GM12878 (cell line): ENCODE measurements at regions of chr12 and their contacts with region 1.

Region 1: DNA sequence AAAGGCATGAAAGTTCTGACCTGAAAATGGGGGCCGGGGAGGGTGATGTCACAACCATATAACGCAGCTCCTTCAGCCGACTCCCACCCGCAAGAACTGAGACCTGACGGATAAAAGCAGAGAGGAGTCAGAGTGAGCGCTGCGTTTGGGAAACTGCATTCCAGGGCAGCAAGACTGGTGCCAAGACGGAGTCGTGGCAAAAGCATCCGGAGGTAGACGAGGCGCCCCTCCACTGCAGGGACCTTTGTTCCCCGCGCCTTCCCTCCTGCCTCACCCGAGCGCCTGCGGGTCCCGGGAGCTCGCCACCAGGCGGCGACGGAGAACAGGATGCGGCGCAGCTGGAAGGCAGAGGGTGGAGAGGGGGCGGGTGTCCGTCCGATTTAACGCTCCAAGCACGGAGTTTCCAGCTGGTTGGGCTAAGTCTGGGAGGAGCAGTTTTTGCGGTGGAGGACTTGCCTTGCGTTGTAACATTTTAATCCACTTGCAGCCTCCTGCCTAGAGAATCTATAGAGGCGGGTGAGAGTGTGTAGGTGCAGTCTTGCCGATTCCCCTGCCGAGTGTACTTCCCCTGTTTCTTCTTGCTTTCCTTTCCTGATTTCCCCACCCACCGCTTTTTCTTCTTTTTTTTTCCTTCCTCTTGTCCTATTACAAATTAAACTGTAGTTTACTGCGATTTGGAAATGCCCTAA is 1.2 kb upstream of the CPNE8 start:
- DNase-seq: peak; percentile 56
- ATAC-seq: peak; percentile 71
- H3K4me3 ChIP-seq: peak overlapping the region; percentile 82
- H3K27ac ChIP-seq: peak overlapping the region; percentile 95
- H3K4me1 ChIP-seq: no peaks in the 10 kb centered on the region; the same call in 1 of the 2 replicates
- H3K27me3 ChIP-seq: no peaks in the 10 kb centered on the region
- CTCF ChIP-seq: peak; percentile 88 to 92 (median 89)
- EP300 ChIP-seq: 0 out of 4 replicates have a peak, but pooled peaks of 1 of the 2 experiments have one; percentile 17
- POLR2A ChIP-seq: peak; percentile 78
- RAD21 ChIP-seq: peak; percentile 82

Region 2: GRCh38 chr12:38324896-38325295 is 581.7 kb before region 1 on chr12:
- CTCF ChIA-PET with region 1: interaction called, 24 read pairs
- POLR2A ChIA-PET with region 1: interaction called, 3 read pairs
- RAD21 ChIA-PET with region 1: interaction called, 17 read pairs
- SMC1A ChIA-PET with region 1: interaction called, 12 read pairs
- in situ Hi-C with region 1: no loop called
- intact Hi-C with region 1: loop called (anchors 5 kb)
- DNase-seq: no peak
- ATAC-seq: no peak
- H3K4me3 ChIP-seq: no peak overlapping the region
- H3K27ac ChIP-seq: no peak overlapping the region
- H3K4me1 ChIP-seq: no peaks in the 10 kb centered on the region
- H3K27me3 ChIP-seq: no peaks in the 10 kb centered on the region
- CTCF ChIP-seq: no peak
- EP300 ChIP-seq: no peak
- POLR2A ChIP-seq: no peak
- RAD21 ChIP-seq: no peak

Region 3: DNA sequence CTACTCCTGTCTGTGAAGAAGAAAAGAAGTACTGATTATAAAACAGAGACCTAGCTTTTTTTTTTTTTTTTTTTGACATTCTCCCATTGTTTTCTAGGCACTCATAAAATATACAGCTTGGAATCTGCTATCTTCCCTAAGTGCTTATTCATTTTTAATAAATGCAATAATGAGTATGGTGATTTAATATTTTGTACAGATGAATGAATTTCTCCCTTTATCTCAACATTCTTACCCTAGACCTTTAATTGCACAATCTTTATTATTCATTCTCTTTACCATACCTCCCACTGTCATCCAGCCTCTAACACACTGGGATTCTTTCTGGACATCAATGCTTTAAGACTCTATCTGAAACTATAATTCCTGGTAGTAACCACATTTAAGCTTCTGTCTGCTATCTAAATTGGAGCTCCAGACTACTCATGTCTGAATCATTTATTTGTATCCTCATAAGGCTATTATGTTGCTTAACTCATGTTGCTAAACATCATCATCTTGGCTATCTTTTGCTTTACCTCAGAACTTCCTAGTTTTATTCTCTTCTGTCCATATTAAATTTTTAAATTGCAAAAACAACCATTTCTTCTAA is 319.9 kb before region 1 on chr12:
- CTCF ChIA-PET with region 1: interaction called, 3 read pairs
- POLR2A ChIA-PET with region 1: no interaction called
- RAD21 ChIA-PET with region 1: no interaction called
- SMC1A ChIA-PET with region 1: interaction called, 4 read pairs
- in situ Hi-C with region 1: no loop called
- intact Hi-C with region 1: loop called (anchors 10 kb)
- DNase-seq: no peak
- ATAC-seq: no peak
- H3K4me3 ChIP-seq: no peak overlapping the region
- H3K27ac ChIP-seq: no peak overlapping the region
- H3K4me1 ChIP-seq: no peaks in the 10 kb centered on the region
- H3K27me3 ChIP-seq: no peaks in the 10 kb centered on the region
- CTCF ChIP-seq: no peak
- EP300 ChIP-seq: no peak
- POLR2A ChIP-seq: no peak
- RAD21 ChIP-seq: no peak

Region 4: DNA sequence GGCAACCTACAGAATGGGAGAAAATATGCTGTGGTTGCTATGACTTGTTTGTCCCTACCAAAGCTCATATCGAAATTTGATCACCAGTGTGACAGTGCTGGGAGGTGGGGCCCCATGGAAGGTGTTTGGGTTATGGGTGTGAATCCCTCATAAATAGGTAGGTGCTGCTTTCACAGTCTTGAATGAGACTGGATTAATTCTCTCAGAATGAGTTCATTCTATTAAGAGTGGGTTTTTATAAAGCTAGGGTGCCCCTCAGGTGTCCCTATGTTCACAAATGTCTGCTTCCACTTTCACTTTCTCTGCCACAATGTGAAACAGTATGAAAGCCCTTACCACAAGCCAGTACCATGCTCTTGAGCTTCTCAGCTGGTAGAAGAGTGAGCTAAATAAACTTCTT is 134.8 kb before region 1 on chr12:
- CTCF ChIA-PET with region 1: interaction called, 34 read pairs
- POLR2A ChIA-PET with region 1: interaction called, 27 read pairs
- RAD21 ChIA-PET with region 1: interaction called, 58 read pairs
- SMC1A ChIA-PET with region 1: interaction called, 24 read pairs
- in situ Hi-C with region 1: no loop called
- intact Hi-C with region 1: loop called (anchors 2 kb)
- DNase-seq: peak; percentile 71
- ATAC-seq: peak; percentile 85
- H3K4me3 ChIP-seq: peak overlapping the region; percentile 6; the same call in 1 of the 2 replicates
- H3K27ac ChIP-seq: peak overlapping the region; percentile 75
- H3K4me1 ChIP-seq: peaks cover 11% of the 10 kb centered on the region; the same call in 1 of the 2 replicates
- H3K27me3 ChIP-seq: no peaks in the 10 kb centered on the region
- CTCF ChIP-seq: no peak
- EP300 ChIP-seq: no peak
- POLR2A ChIP-seq: no peak
- RAD21 ChIP-seq: no peak

Region 5: GRCh38 chr12:38880288-38880687 is 26.3 kb before region 1 on chr12:
- CTCF ChIA-PET with region 1: interaction called, 23 read pairs
- POLR2A ChIA-PET with region 1: interaction called, 4 read pairs
- RAD21 ChIA-PET with region 1: interaction called, 170 read pairs
- SMC1A ChIA-PET with region 1: interaction called, 38 read pairs
- in situ Hi-C with region 1: no loop called
- intact Hi-C with region 1: loop called (anchors 2 kb)
- DNase-seq: peak; percentile 30
- ATAC-seq: peak; percentile 86
- H3K4me3 ChIP-seq: no peak overlapping the region
- H3K27ac ChIP-seq: no peak overlapping the region
- H3K4me1 ChIP-seq: no peaks in the 10 kb centered on the region
- H3K27me3 ChIP-seq: no peaks in the 10 kb centered on the region
- CTCF ChIP-seq: no peak
- EP300 ChIP-seq: 0 out of 4 replicates have a peak, but pooled peaks of 1 of the 2 experiments have one; percentile 8
- POLR2A ChIP-seq: no peak
- RAD21 ChIP-seq: no peak

Region 6: GRCh38 chr12:38921025-38921677 is 14.5 kb after region 1 on chr12:
- CTCF ChIA-PET with region 1: interaction called, 26 read pairs
- POLR2A ChIA-PET with region 1: interaction called, 5 read pairs
- RAD21 ChIA-PET with region 1: interaction called, 4 read pairs
- SMC1A ChIA-PET with region 1: interaction called, 12 read pairs
- in situ Hi-C with region 1: no loop called
- intact Hi-C with region 1: no loop called
- DNase-seq: no peak
- ATAC-seq: peak; percentile 95
- H3K4me3 ChIP-seq: no peak overlapping the region
- H3K27ac ChIP-seq: no peak overlapping the region
- H3K4me1 ChIP-seq: no peaks in the 10 kb centered on the region
- H3K27me3 ChIP-seq: no peaks in the 10 kb centered on the region
- CTCF ChIP-seq: peak; percentile 60 to 73 (median 61)
- EP300 ChIP-seq: no peak
- POLR2A ChIP-seq: no peak
- RAD21 ChIP-seq: peak; percentile 63

Region 7: DNA sequence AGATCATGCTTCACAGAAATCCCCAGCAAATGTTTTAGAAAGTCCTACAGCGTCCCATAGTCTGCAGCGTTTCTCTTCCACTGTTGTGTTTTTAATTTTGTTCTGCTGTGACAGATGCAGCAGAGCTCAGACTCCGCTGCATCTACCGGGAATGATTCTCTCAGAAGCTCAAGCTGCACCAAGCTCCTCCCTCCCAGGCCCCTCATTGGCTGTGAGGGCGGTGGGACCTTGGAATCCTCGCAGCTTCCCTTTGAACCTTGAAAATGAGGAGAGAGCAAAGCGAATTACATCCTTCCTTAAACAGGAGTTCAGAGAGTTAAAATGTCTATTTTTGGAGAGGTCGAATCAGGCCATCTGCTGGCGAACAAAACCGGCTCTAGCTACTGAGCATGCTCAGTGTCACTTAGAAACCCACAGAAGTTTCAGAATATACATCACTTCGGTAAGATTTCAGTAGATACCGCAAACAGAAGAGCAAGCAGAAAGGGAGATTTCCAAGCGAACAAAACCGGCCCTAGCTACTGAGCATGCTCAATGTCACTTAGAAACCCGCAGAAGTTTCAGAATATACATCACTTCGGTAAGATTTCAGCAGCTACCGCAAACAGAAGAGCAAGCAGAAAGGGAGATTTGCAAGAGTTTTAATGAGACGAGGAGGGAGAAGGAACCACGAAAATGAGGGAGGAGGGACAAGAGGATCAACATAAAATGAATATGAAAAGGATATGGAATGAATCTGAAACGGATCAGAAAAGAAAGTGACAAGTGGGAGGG is 713.2 kb after region 1 on chr12 and contains the start of gene ABCD2:
- CTCF ChIA-PET with region 1: no interaction called
- POLR2A ChIA-PET with region 1: no interaction called
- RAD21 ChIA-PET with region 1: no interaction called
- SMC1A ChIA-PET with region 1: no interaction called
- in situ Hi-C with region 1: no loop called
- intact Hi-C with region 1: loop called (anchors 10 kb)
- DNase-seq: peak; percentile 97
- ATAC-seq: peak; percentile 62
- H3K4me3 ChIP-seq: peak within 1 kb of the TSS; percentile 95
- H3K27ac ChIP-seq: peak within 1 kb of the TSS; percentile 98
- H3K4me1 ChIP-seq: peaks cover 16% of the 10 kb centered on the region
- H3K27me3 ChIP-seq: no peaks in the 10 kb centered on the region
- CTCF ChIP-seq: peak; percentile 3 to 30 (median 21); a peak in 2 of 6 replicates
- EP300 ChIP-seq: peak; percentile 32 to 86; a peak in 3 of 4 replicates
- POLR2A ChIP-seq: peak; percentile 62
- RAD21 ChIP-seq: no peak
- polyA plus RNA-seq, gene ABCD2: 4.4 to 5.7 TPM